Activated CD4-positive, alpha-beta memory T cell treated with anti-CD3 and anti-CD28 coated beads for 36 hours (primary cell): ENCODE measurements at regions of chr19 and their contacts with region 1.

Region 1: GRCh38 chr19:19663256-19664038 is at the start of gene ATP13A1:
- DNase-seq: peak; percentile 95
- H3K4me3 Mint-ChIP-seq: peak within 1 kb of the TSS; percentile 96
- H3K27ac Mint-ChIP-seq: peak within 1 kb of the TSS; percentile 98
- H3K4me1 Mint-ChIP-seq: peaks cover 39% of the 10 kb centered on the region
- H3K27me3 Mint-ChIP-seq: no peaks in the 10 kb centered on the region
- total RNA-seq, gene ATP13A1: 66.6 to 69.2 TPM

Region 2: DNA sequence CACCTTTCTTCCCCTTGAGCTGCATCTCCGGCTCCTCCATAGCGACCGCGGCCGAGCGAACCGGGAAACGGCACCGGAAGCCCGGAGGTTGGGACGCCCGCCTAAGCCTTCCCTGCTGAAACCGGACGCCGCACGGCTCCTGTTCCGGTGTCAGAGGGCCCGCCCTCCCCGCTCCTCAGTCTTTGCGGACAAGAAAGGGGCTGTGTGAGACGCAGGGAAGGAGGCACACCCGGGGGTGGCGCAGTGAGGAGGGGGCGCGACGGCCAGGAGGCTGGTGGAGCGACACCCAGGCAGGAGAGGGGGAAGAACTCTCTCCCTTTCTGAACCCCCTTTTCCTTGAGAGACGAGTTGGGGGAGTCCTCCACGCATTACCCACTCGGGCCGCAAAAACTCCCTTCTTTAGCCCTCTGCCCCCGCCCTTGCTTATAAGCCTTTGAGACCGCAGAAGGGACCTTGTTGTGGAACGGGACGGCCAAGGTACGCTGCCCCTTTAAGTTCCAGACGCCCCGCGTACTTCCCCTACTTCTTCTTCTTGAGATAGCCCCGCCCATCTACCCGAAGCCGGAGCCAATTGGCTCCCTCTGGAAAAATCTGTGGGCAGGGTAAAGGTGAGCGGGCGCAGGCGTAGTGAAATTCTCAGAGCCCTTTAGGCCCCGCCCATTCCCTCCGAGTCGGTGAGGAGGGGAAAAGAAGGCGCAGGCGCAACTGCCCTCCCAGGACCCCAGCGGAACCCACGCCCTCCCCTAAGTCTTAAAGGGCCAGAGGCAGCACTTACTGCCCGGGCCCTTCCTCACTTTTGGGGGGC is 471.2 kb before region 1 on chr19 and contains the starts of genes BORCS8 and RFXANK:
- CTCF ChIA-PET with region 1: no interaction called
- POLR2A ChIA-PET with region 1: no interaction called
- intact Hi-C with region 1: loop called (anchors 10 kb)
- DNase-seq: peak; percentile 100
- H3K4me3 Mint-ChIP-seq: peak within 1 kb of the TSS; percentile 96
- H3K27ac Mint-ChIP-seq: peak within 1 kb of the TSS; percentile 96
- H3K4me1 Mint-ChIP-seq: peaks cover 38% of the 10 kb centered on the region
- H3K27me3 Mint-ChIP-seq: no peaks in the 10 kb centered on the region
- total RNA-seq, gene BORCS8: 16.4 to 17.8 TPM
- total RNA-seq, gene RFXANK: 73.7 to 78.1 TPM

Region 3: GRCh38 chr19:19597809-19598306 is 65.6 kb before region 1 on chr19:
- CTCF ChIA-PET with region 1: interaction called, 5 read pairs
- POLR2A ChIA-PET with region 1: interaction called, 5 read pairs
- intact Hi-C with region 1: loop called (anchors 2 kb)
- DNase-seq: peak; percentile 74
- H3K4me3 Mint-ChIP-seq: peak overlapping the region; percentile 75
- H3K27ac Mint-ChIP-seq: peak overlapping the region; percentile 100
- H3K4me1 Mint-ChIP-seq: peaks cover 81% of the 10 kb centered on the region
- H3K27me3 Mint-ChIP-seq: no peaks in the 10 kb centered on the region

Region 4: DNA sequence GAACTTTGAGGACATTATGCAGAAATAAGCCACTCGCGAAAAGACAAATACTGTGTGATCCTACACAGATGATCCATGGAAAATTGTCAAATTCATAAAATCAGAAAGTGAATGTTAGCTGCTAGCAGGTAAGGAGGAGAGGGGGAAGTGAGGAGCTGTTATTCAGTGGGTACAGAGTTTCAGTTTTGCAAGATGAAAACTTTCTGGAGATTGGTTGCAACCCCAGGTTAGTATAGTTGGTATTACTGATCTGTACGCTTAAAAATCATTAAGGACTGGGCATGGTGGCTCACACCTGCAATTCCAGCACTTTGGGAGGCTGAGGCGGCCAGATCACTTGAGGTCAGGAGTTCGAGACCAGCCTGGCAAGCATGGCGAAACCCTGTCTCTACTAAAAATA is 23.1 kb after region 1 on chr19:
- CTCF ChIA-PET with region 1: no interaction called
- POLR2A ChIA-PET with region 1: no interaction called
- intact Hi-C with region 1: no loop called
- DNase-seq: no peak
- H3K4me3 Mint-ChIP-seq: no peak overlapping the region
- H3K27ac Mint-ChIP-seq: no peak overlapping the region
- H3K4me1 Mint-ChIP-seq: no peaks in the 10 kb centered on the region
- H3K27me3 Mint-ChIP-seq: no peaks in the 10 kb centered on the region

Region 5: GRCh38 chr19:19732579-19733501 is 69.4 kb after region 1 on chr19 and contains the start of gene ZNF14:
- CTCF ChIA-PET with region 1: interaction called, 3 read pairs
- POLR2A ChIA-PET with region 1: interaction called, 18 read pairs
- intact Hi-C with region 1: loop called (anchors 1 kb)
- DNase-seq: peak; percentile 96
- H3K4me3 Mint-ChIP-seq: peak within 1 kb of the TSS; percentile 99
- H3K27ac Mint-ChIP-seq: peak within 1 kb of the TSS; percentile 94
- H3K4me1 Mint-ChIP-seq: peaks cover 17% of the 10 kb centered on the region
- H3K27me3 Mint-ChIP-seq: no peaks in the 10 kb centered on the region
- total RNA-seq, gene ZNF14: 6.8 to 7.9 TPM

Region 6: DNA sequence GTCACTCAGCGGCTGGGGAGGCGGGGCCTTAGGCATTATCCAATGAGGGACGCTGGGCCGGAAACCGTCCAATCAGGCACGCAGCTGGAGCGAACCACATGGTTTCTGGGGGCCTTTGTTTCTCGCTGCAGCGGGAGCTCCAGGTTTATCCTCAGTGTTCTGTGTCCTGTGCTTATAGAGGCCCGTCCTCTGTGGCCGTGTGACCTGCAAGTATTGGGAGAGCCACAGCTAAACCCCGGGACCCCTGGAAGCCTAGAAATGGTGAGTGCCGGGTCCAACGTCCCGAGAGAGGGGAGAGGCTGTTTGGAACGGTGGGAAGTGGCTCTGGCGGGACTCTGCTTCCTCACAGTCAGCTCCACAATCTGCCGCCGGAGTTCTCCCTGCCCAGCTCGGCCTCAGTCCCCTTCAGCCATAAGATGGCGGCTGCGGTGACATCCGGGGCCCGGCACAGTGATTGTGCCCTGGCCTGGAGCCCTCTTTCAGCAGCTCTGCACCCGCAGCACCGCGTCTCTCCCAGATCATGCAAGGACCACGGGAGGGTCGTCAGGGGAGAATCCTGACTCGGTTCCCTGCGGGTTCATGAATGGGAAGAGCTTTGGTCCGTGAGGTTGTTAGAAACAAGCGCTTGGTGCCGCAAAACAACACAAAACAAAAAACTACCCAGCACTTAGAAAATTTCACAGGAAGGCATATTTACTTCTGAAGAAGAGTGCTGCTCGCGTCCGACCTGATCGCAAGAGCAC is 202.5 kb after region 1 on chr19 and contains the start of gene ZNF253:
- CTCF ChIA-PET with region 1: no interaction called
- POLR2A ChIA-PET with region 1: interaction called, 12 read pairs
- intact Hi-C with region 1: loop called (anchors 1 kb)
- DNase-seq: peak; percentile 98
- H3K4me3 Mint-ChIP-seq: peak within 1 kb of the TSS; percentile 99
- H3K27ac Mint-ChIP-seq: peak within 1 kb of the TSS; percentile 98
- H3K4me1 Mint-ChIP-seq: peaks cover 19% of the 10 kb centered on the region
- H3K27me3 Mint-ChIP-seq: no peaks in the 10 kb centered on the region
- total RNA-seq, gene ZNF253: 11.0 to 12.9 TPM

Region 7: DNA sequence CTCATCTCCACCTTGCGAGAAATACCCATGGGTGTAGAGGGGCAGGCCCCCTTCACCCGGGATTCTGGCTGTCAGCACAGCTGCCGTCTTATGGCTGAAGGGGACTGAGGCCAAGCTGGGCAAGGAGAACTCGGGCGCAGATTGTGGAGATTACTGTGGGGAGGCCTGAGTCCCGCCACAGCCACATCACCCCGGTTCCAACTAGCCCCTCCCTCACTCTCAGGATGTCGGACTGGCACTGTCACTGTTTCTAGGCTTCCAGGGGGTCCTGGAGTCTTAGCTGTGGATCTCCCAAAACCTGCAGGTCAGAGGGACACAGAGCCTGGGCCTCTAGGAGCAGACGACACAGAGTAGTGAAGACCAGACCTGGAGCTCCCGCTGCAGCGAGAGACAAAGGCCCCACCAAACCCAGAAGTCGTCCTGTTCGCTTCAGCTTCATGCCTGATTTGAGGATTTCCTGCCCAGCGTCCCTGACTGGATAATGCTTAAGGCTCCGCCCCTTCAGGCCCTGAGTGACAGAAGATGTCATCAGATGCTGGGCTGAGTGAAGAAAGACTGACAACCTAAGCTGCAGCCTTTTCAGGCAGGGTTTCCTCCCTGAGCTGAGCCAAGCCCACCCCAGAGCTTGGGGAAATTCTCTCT is 293.1 kb after region 1 on chr19:
- CTCF ChIA-PET with region 1: interaction called, 3 read pairs
- POLR2A ChIA-PET with region 1: no interaction called
- intact Hi-C with region 1: loop called (anchors 2 kb)
- DNase-seq: no peak
- H3K4me3 Mint-ChIP-seq: no peak overlapping the region
- H3K27ac Mint-ChIP-seq: no peak overlapping the region
- H3K4me1 Mint-ChIP-seq: peaks cover 5% of the 10 kb centered on the region
- H3K27me3 Mint-ChIP-seq: no peaks in the 10 kb centered on the region